HepG2 (cell line): ENCODE measurements at regions of chr20 and their contacts with region 1.

Region 1: DNA sequence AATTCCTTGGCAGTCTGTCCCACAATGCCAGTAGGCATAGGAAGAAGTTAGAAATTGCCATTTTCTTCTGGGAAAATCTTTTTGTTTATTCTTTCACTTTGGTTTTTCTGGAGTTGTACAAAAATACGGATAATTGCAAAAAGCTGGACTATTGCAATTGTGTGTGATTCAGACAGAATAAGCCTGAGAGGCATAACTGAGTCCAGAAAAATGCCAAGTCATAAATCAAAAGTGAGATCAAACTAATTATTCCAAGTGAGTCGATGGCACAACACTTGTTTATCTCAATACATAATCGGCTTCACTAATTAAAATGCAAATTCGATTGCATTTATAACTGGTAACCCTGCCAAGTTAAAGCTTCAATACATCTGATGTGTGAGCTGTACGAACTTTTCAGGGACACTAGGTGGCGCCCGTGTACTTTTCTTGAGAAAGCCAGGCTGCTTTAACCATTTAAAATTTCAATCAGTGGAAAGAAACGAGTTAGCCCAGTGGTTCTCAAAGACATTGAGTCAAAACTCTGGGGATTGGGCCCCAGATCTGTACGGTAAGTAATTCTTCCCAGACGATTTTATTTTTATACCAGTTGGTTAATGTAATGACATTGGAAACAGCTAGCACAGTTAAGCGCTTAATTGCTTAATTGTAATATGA is 102.6 kb downstream of the LAMP5 start:
- DNase-seq: peak; percentile 67
- ATAC-seq: peak; percentile 80
- H3K4me3 ChIP-seq: no peak overlapping the region
- H3K27ac ChIP-seq: no peak overlapping the region
- H3K4me1 ChIP-seq: no peaks in the 10 kb centered on the region
- H3K27me3 ChIP-seq: no peaks in the 10 kb centered on the region
- CTCF ChIP-seq: peak; percentile 89
- EP300 ChIP-seq: no peak
- POLR2A ChIP-seq: no peak
- RAD21 ChIP-seq: peak; percentile 85

Region 2: DNA sequence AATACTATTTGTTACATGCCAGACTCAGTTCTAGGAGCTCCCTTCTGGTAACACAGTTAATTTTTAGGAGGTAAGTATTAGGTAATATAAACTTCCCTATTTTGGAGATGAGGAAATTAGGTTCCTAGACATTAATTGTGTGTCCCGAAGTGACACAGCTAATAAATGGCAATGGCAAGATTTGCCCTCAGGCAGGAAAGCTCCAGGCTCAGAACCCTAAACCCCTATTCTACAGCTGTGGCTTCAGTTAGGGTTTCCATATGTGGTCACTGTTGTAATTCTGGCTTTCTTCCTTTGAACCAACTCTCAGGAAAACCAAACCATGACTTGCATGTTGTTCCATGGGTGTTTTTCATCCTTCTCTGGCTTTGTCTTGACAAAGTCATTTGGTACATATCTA is 1296.7 kb before region 1 on chr20:
- CTCF ChIA-PET with region 1: no interaction called
- POLR2A ChIA-PET with region 1: no interaction called
- in situ Hi-C with region 1: no loop called
- intact Hi-C with region 1: no loop called
- DNase-seq: no peak
- ATAC-seq: no peak
- H3K4me3 ChIP-seq: no peak overlapping the region
- H3K27ac ChIP-seq: no peak overlapping the region
- H3K4me1 ChIP-seq: peaks cover 11% of the 10 kb centered on the region
- H3K27me3 ChIP-seq: no peaks in the 10 kb centered on the region
- CTCF ChIP-seq: no peak
- EP300 ChIP-seq: no peak
- POLR2A ChIP-seq: no peak
- RAD21 ChIP-seq: no peak

Region 3: GRCh38 chr20:9672981-9673380 is 56.0 kb after region 1 on chr20:
- CTCF ChIA-PET with region 1: no interaction called
- POLR2A ChIA-PET with region 1: no interaction called
- in situ Hi-C with region 1: no loop called
- intact Hi-C with region 1: no loop called
- DNase-seq: no peak
- ATAC-seq: no peak
- H3K4me3 ChIP-seq: no peak overlapping the region
- H3K27ac ChIP-seq: no peak overlapping the region
- H3K4me1 ChIP-seq: no peaks in the 10 kb centered on the region
- H3K27me3 ChIP-seq: no peaks in the 10 kb centered on the region
- CTCF ChIP-seq: no peak
- EP300 ChIP-seq: no peak
- POLR2A ChIP-seq: no peak
- RAD21 ChIP-seq: no peak

Region 4: DNA sequence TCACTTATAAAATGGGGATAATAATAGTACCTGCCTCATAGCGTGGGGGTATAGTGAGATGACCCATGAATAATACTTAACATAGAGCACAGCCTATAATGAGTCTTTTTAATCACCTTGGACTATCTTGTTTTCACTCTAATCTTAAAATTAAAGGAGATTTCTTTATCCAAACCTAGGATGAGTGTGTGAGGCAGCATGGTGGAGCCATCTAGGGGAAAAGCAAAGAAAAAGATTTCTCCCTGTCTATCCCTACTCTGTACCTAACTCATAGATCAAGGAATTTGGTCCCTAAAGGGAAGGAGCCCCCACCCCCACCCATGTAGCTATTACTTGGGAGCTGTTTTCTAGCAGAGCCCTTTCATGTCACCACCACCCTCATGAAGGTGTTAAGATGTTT is 267.1 kb after region 1 on chr20:
- CTCF ChIA-PET with region 1: interaction called, 12 read pairs
- POLR2A ChIA-PET with region 1: no interaction called
- in situ Hi-C with region 1: no loop called
- intact Hi-C with region 1: loop called (anchors 1 kb)
- DNase-seq: no peak
- ATAC-seq: peak; percentile 86
- H3K4me3 ChIP-seq: no peak overlapping the region
- H3K27ac ChIP-seq: no peak overlapping the region
- H3K4me1 ChIP-seq: no peaks in the 10 kb centered on the region
- H3K27me3 ChIP-seq: no peaks in the 10 kb centered on the region
- CTCF ChIP-seq: no peak
- EP300 ChIP-seq: no peak
- POLR2A ChIP-seq: no peak
- RAD21 ChIP-seq: no peak

Region 5: GRCh38 chr20:9966966-9967365 is 350.0 kb after region 1 on chr20:
- CTCF ChIA-PET with region 1: interaction called, 7 read pairs
- POLR2A ChIA-PET with region 1: no interaction called
- in situ Hi-C with region 1: no loop called
- intact Hi-C with region 1: loop called (anchors 1 kb)
- DNase-seq: peak; percentile 13
- ATAC-seq: peak; percentile 85
- H3K4me3 ChIP-seq: no peak overlapping the region
- H3K27ac ChIP-seq: no peak overlapping the region
- H3K4me1 ChIP-seq: no peaks in the 10 kb centered on the region
- H3K27me3 ChIP-seq: no peaks in the 10 kb centered on the region
- CTCF ChIP-seq: peak; percentile 34
- EP300 ChIP-seq: no peak
- POLR2A ChIP-seq: no peak
- RAD21 ChIP-seq: no peak

Region 6: GRCh38 chr20:10225439-10226060 is 608.6 kb after region 1 on chr20:
- CTCF ChIA-PET with region 1: no interaction called
- POLR2A ChIA-PET with region 1: no interaction called
- in situ Hi-C with region 1: no loop called
- intact Hi-C with region 1: loop called (anchors 5 kb)
- DNase-seq: peak; percentile 54
- ATAC-seq: peak; percentile 89
- H3K4me3 ChIP-seq: no peak overlapping the region
- H3K27ac ChIP-seq: no peak overlapping the region
- H3K4me1 ChIP-seq: peaks cover 9% of the 10 kb centered on the region
- H3K27me3 ChIP-seq: 0 out of 5 replicates have a peak, but pooled peaks cover 0 to 1% of the 10 kb centered on the region in 2 experiments
- CTCF ChIP-seq: peak; percentile 47
- EP300 ChIP-seq: no peak
- POLR2A ChIP-seq: no peak
- RAD21 ChIP-seq: peak; percentile 34; the same call in 1 of the 2 replicates

Region 7: GRCh38 chr20:11544029-11544678 is 1927.2 kb after region 1 on chr20:
- CTCF ChIA-PET with region 1: interaction called, 14 read pairs
- POLR2A ChIA-PET with region 1: no interaction called
- in situ Hi-C with region 1: loop called (anchors 10 kb)
- intact Hi-C with region 1: no loop called
- DNase-seq: peak; percentile 72
- ATAC-seq: peak; percentile 88
- H3K4me3 ChIP-seq: no peak overlapping the region
- H3K27ac ChIP-seq: no peak overlapping the region
- H3K4me1 ChIP-seq: peaks cover 12% of the 10 kb centered on the region
- H3K27me3 ChIP-seq: no peaks in the 10 kb centered on the region; a peak in 1 of 5 replicates
- CTCF ChIP-seq: peak; percentile 85
- EP300 ChIP-seq: no peak
- POLR2A ChIP-seq: no peak
- RAD21 ChIP-seq: peak; percentile 41; the same call in 1 of the 2 replicates